GM12878 (cell line): ENCODE measurements at regions of chr9 and their contacts with region 1.

Region 1: DNA sequence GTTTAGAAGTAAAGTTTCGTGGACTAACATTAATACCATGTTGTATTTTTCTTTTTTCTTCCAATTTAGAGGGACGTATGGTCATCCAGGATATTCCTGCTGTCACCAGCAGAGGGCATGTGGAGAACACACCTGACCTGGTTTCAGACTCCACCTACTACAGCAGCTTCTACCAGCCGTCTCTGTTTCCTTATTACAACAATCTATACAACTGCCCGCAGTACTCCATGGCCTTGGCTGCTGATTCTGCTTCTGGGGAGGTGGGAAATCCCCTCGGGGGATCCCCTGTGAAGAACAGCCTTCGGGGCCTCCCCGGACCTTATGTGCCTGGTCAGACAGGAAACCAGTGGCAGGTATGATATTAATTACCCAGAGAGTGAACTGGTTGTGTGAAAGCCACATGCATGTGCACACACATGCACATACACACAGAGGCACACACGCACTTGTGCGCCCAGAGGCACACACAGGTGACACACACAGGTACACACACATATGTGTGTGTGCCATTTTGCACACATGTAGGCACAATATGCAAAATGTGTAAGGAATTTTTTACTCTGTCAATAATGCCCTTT is 52.4 kb downstream of the DMRT1 start:
- DNase-seq: peak; percentile 91
- ATAC-seq: peak; percentile 99
- H3K4me3 ChIP-seq: no peak overlapping the region
- H3K27ac ChIP-seq: no peak overlapping the region
- H3K4me1 ChIP-seq: peaks cover 11% of the 10 kb centered on the region
- H3K27me3 ChIP-seq: no peaks in the 10 kb centered on the region
- CTCF ChIP-seq: peak; percentile 76 to 96 (median 84); a peak in 5 of 6 replicates
- EP300 ChIP-seq: peak; percentile 86 to 92; a peak in 3 of 4 replicates
- POLR2A ChIP-seq: no peak
- RAD21 ChIP-seq: peak; percentile 89

Region 2: GRCh38 chr9:613771-614347 is 280.1 kb before region 1 on chr9:
- CTCF ChIA-PET with region 1: interaction called, 4 read pairs
- POLR2A ChIA-PET with region 1: no interaction called
- RAD21 ChIA-PET with region 1: no interaction called
- SMC1A ChIA-PET with region 1: interaction called, 3 read pairs
- in situ Hi-C with region 1: loop called (anchors 5 kb)
- intact Hi-C with region 1: loop called (anchors 2 kb)
- DNase-seq: peak; percentile 8
- ATAC-seq: peak; percentile 100
- H3K4me3 ChIP-seq: no peak overlapping the region
- H3K27ac ChIP-seq: no peak overlapping the region
- H3K4me1 ChIP-seq: no peaks in the 10 kb centered on the region
- H3K27me3 ChIP-seq: no peaks in the 10 kb centered on the region
- CTCF ChIP-seq: peak; percentile 72 to 80 (median 78)
- EP300 ChIP-seq: no peak
- POLR2A ChIP-seq: no peak
- RAD21 ChIP-seq: peak; percentile 68

Region 3: GRCh38 chr9:859251-859650 is 34.7 kb before region 1 on chr9:
- CTCF ChIA-PET with region 1: interaction called, 21 read pairs
- POLR2A ChIA-PET with region 1: interaction called, 3 read pairs
- RAD21 ChIA-PET with region 1: interaction called, 6 read pairs
- SMC1A ChIA-PET with region 1: interaction called, 6 read pairs
- in situ Hi-C with region 1: no loop called
- intact Hi-C with region 1: loop called (anchors 1 kb)
- DNase-seq: peak; percentile 69
- ATAC-seq: peak; percentile 99
- H3K4me3 ChIP-seq: no peak overlapping the region
- H3K27ac ChIP-seq: no peak overlapping the region
- H3K4me1 ChIP-seq: peaks cover 7% of the 10 kb centered on the region; the same call in 1 of the 2 replicates
- H3K27me3 ChIP-seq: no peaks in the 10 kb centered on the region
- CTCF ChIP-seq: no peak; a peak in 1 of 6 replicates
- EP300 ChIP-seq: peak; percentile 81 to 86; a peak in 3 of 4 replicates
- POLR2A ChIP-seq: no peak
- RAD21 ChIP-seq: no peak

Region 4: DNA sequence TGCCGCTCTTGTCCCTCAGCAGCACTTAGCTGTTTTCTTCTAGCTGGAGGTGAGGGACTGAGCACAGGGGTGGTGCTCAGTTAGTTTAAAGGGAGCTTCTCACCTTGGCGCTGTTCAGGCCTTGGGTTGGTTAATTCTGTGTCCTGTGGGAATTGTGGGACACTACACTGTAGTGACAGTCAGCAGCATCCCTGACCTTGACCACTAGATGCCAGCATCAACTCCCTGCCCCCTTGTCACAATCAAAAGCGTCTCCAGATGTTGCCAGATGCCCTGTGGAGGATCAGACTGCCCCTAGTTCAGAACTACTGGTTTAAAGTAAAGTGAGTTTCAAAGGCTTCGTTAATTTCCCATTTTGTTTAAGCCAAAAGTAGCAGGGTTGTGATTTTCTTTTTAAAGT is 17.1 kb after region 1 on chr9:
- CTCF ChIA-PET with region 1: interaction called, 4 read pairs
- POLR2A ChIA-PET with region 1: interaction called, 3 read pairs
- RAD21 ChIA-PET with region 1: interaction called, 4 read pairs
- SMC1A ChIA-PET with region 1: interaction called, 10 read pairs
- in situ Hi-C with region 1: no loop called
- intact Hi-C with region 1: no loop called
- DNase-seq: no peak
- ATAC-seq: peak; percentile 87
- H3K4me3 ChIP-seq: no peak overlapping the region
- H3K27ac ChIP-seq: no peak overlapping the region
- H3K4me1 ChIP-seq: no peaks in the 10 kb centered on the region
- H3K27me3 ChIP-seq: peaks cover 4 to 6% of the 10 kb centered on the region in 2 experiments
- CTCF ChIP-seq: peak; percentile 8 to 27 (median 22); a peak in 1 of 6 replicates
- EP300 ChIP-seq: no peak
- POLR2A ChIP-seq: no peak
- RAD21 ChIP-seq: no peak

Region 5: DNA sequence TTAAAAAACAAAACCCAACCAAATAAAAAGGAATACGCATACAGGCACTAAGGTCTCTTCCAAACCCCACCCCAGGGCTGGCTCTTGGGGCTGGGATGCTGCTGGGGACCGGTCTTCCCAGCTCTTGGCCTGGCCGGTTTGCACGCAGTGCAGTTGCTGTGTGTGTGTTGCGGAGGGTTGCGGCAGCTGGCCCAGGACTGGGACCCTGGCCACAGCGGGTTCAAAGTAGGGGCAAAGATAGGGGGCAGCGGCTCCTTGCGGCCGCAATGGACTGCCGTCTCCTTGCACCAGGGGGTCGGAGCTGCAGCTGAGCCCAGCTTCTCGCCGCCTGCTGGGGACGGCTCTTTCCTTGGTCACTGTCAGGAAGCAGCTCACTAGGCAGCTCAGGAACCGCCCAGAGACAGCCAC is 87.6 kb after region 1 on chr9:
- CTCF ChIA-PET with region 1: interaction called, 10 read pairs
- POLR2A ChIA-PET with region 1: no interaction called
- RAD21 ChIA-PET with region 1: interaction called, 4 read pairs
- SMC1A ChIA-PET with region 1: no interaction called
- in situ Hi-C with region 1: no loop called
- intact Hi-C with region 1: no loop called
- DNase-seq: no peak
- ATAC-seq: peak; percentile 50
- H3K4me3 ChIP-seq: no peak overlapping the region
- H3K27ac ChIP-seq: no peak overlapping the region
- H3K4me1 ChIP-seq: no peaks in the 10 kb centered on the region
- H3K27me3 ChIP-seq: peaks cover 17 to 30% of the 10 kb centered on the region in 2 experiments
- CTCF ChIP-seq: no peak; a peak in 1 of 6 replicates
- EP300 ChIP-seq: no peak
- POLR2A ChIP-seq: no peak
- RAD21 ChIP-seq: no peak

Region 6: GRCh38 chr9:1001838-1002237 is 107.9 kb after region 1 on chr9:
- CTCF ChIA-PET with region 1: interaction called, 153 read pairs
- POLR2A ChIA-PET with region 1: interaction called, 4 read pairs
- RAD21 ChIA-PET with region 1: interaction called, 43 read pairs
- SMC1A ChIA-PET with region 1: interaction called, 92 read pairs
- in situ Hi-C with region 1: loop called (anchors 5 kb)
- intact Hi-C with region 1: loop called (anchors 1 kb)
- DNase-seq: no peak
- ATAC-seq: no peak
- H3K4me3 ChIP-seq: no peak overlapping the region
- H3K27ac ChIP-seq: no peak overlapping the region
- H3K4me1 ChIP-seq: peaks cover 3% of the 10 kb centered on the region; the same call in 1 of the 2 replicates
- H3K27me3 ChIP-seq: no peaks in the 10 kb centered on the region
- CTCF ChIP-seq: no peak
- EP300 ChIP-seq: no peak
- POLR2A ChIP-seq: no peak
- RAD21 ChIP-seq: no peak